ENCODE measurements at regions of chr9 and their contacts with region 1.

Region 1: DNA sequence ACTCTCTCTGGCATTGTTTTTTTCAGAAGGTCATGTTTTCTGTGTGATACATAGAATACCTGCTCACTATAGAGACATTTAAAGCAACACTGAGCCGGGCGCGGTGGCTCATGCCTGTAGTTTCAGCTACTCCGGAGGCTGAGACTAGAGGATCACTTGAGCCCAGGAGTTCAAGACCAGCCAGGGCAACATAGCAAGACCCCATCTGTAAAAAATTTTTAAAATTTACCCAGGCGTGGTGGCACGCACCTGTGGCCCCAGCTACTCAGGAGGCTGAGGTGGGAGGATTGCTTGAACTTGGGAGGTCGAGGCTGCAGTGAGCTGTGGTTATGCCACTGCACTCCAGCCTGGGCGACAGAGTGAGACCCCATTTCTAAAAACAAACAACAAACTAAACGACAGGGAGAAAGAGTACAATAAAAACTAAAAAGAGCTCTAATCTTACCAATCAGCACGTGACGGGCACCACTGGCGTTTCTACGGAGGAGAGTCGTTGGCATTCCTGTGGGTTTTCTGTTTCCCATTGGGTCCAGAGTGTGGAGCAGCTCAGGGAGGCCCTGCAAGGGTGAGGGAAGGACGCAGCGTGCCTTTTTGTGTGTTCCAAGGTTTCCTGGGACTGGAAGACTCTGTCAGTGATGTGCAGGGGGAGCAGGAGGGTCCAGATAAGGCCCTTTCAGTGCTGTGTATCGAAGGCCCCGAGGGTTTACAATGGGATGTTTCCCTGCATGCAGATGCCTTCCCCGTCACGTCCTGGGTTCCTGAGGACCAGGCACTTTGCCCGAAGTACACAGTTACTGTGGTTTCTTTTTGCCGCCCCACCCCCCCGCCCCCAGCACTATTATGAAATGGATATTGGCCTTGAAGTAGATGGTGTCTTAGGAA is 7.2 kb upstream of the RNU6ATAC start:
- DNase-seq: peak; percentile 73 to 75
- H3K4me3 ChIP-seq: peak overlapping the region in 1 of 3 donors; percentile 35
- H3K27ac ChIP-seq: peak overlapping the region; percentile 79 to 88
- H3K4me1 ChIP-seq: peaks cover 15 to 16% of the 10 kb centered on the region in 2 donors
- H3K27me3 ChIP-seq: peaks cover 0 to 7% of the 10 kb centered on the region in 2 donors
- CTCF ChIP-seq: no peak
- POLR2A ChIP-seq: no peak

Region 2: GRCh38 chr9:134217832-134218629 is 46.5 kb after region 1 on chr9:
- intact Hi-C with region 1: loop called (anchors 1 kb)
- DNase-seq: no peak
- H3K4me3 ChIP-seq: no peak overlapping the region
- H3K27ac ChIP-seq: no peak overlapping the region
- H3K4me1 ChIP-seq: peaks cover 2 to 12% of the 10 kb centered on the region in 2 donors
- H3K27me3 ChIP-seq: no peaks in the 10 kb centered on the region
- CTCF ChIP-seq: peak in 1 of 3 donors; percentile 27
- POLR2A ChIP-seq: no peak

Region 3: DNA sequence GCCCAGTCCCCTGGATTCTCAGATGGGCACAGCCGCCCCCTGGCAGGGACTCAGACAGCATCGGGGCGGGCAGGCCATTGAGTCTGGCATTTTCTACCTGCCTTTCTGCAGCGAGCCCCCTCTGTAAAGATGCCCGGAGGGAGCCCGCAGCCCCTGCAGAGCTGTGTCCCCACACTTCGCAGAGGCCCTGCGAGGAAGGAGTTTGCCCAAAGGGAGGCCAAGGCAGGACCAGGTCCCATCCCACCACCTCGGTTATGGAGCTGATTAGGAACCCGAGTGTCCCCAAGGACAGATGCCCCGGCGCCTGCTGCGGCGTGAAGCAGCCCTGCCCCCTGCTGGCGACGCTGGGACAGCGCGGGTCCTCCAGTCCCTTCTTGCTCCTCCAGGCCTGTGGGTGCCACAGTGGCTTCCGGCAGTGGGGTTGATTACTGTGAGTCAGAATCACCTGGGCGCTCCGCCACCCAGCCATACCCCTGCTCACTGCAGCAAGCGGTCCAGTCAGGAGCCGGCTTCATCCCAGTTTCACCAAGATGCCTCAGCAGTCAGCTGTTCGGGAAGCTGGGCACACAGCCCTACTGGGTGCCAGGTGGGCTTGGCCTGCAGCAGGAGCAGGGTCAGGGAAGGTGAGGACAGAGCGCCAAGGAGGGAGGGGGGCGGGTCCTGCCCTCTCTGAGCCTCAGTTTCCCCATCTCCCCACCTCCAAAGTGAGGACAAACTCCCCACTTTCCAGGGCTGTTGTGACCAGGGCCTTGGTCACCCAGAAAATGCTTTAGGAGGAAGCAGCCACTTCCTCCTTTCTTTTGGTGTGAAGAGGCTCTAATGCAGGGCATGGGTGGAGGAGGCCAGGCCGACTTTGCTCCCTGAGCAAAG is 271.8 kb after region 1 on chr9:
- intact Hi-C with region 1: loop called (anchors 2 kb)
- DNase-seq: peak; percentile 88 to 93
- H3K4me3 ChIP-seq: peak overlapping the region in 1 of 3 donors; percentile 15
- H3K27ac ChIP-seq: peak overlapping the region in 1 of 2 donors; percentile 44
- H3K4me1 ChIP-seq: peaks cover 11 to 13% of the 10 kb centered on the region in 2 donors
- H3K27me3 ChIP-seq: peaks cover 0 to 6% of the 10 kb centered on the region in 2 donors
- CTCF ChIP-seq: peak; percentile 97 to 99 (median 99)
- POLR2A ChIP-seq: no peak

Measured in breast epithelium (tissue), 4 donors.